ENCODE measurements at regions of chr19 and their contacts with region 1.

Region 1: GRCh38 chr19:4957981-4958380 is 10.9 kb upstream of the KDM4B start:
- DNase-seq: no peak
- H3K4me3 ChIP-seq: no peak overlapping the region
- H3K27ac ChIP-seq: no peak overlapping the region
- H3K4me1 ChIP-seq: no peaks in the 10 kb centered on the region
- H3K27me3 ChIP-seq: no peaks in the 10 kb centered on the region
- CTCF ChIP-seq: no peak

Region 2: GRCh38 chr19:5073153-5073844 is 115.3 kb after region 1 on chr19:
- CTCF ChIA-PET with region 1: no interaction called
- POLR2A ChIA-PET with region 1: interaction called, 14 read pairs
- intact Hi-C with region 1: no loop called
- DNase-seq: no peak
- H3K4me3 ChIP-seq: no peak overlapping the region
- H3K27ac ChIP-seq: no peak overlapping the region
- H3K4me1 ChIP-seq: peaks cover 28% of the 10 kb centered on the region
- H3K27me3 ChIP-seq: no peaks in the 10 kb centered on the region
- CTCF ChIP-seq: no peak

Measured in A673 (cell line).